Endothelial cell of umbilical vein (primary cell): ENCODE measurements at regions of chr11 and their contacts with region 1.

Region 1: GRCh38 chr11:133927690-133928627 is 28.8 kb downstream of the IGSF9B start:
- DNase-seq: peak; percentile 45
- H3K4me3 ChIP-seq: no peak overlapping the region
- H3K27ac ChIP-seq: no peak overlapping the region
- H3K4me1 ChIP-seq: no peaks in the 10 kb centered on the region
- H3K27me3 ChIP-seq: no peaks in the 10 kb centered on the region
- CTCF ChIP-seq: peak; percentile 70 to 89
- POLR2A ChIP-seq: no peak

Region 2: GRCh38 chr11:133947321-133947756 is 19.4 kb after region 1 on chr11:
- CTCF ChIA-PET with region 1: interaction called, 10 read pairs
- POLR2A ChIA-PET with region 1: no interaction called
- dilution Hi-C with region 1: no loop called
- intact Hi-C with region 1: no loop called
- DNase-seq: peak; percentile 20
- H3K4me3 ChIP-seq: no peak overlapping the region
- H3K27ac ChIP-seq: no peak overlapping the region
- H3K4me1 ChIP-seq: no peaks in the 10 kb centered on the region
- H3K27me3 ChIP-seq: peaks cover 17 to 19% of the 10 kb centered on the region in 2 experiments
- CTCF ChIP-seq: peak in 1 of 2 donors; percentile 39
- POLR2A ChIP-seq: no peak

Region 3: DNA sequence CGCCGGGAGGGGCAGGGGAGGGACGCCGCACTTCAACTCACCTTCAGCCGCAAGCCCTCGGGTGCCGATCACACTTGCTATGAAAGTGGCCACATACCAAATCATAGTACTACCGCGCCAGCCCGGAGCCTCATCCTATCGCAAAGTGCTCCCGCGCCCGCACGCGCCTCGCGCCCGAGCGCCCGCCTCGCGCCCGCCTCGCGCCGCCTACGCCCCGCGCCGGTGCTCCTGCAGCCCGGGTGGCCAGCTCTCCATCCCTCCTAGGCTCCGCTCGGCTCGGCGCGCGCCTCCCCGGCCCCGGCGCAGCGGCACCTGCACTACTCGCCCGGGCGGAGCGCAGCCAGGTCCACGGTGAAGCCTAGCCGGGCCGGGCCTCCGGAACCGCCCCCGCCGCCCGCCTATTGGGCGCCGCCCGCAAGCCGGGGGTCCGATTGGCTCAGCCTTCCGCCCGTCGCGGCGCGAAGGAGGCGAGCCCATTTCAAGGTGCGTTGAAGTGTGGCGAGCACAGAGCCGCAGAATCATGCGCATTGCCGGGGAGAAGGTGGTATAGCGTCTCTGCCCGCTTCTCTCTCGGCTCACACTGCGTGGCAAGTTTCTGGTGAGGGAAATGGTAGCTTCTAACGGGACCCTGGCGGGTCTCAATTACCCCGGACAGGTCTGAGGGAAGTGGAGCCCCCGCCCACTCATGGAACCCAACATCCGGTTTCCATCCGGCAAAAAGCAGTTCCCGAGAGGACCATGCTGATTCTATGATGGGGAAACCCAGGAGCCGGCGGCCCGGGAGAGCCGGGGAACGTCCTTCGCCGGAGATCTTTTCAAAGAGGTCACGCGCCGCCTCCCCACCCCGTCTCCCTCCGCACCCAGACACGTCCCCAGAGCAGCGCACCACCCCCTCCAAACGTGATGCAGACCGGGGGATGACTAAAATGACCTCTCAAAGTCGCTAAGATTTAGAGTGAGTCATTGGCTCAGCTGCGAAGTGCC is 29.0 kb after region 1 on chr11 and contains the start of gene IGSF9B:
- CTCF ChIA-PET with region 1: no interaction called
- POLR2A ChIA-PET with region 1: no interaction called
- dilution Hi-C with region 1: no loop called
- intact Hi-C with region 1: loop called (anchors 2 kb)
- DNase-seq: peak; percentile 73
- H3K4me3 ChIP-seq: peak within 1 kb of the TSS; percentile 13 to 39 (median 29)
- H3K27ac ChIP-seq: no peak within 1 kb of the TSS
- H3K4me1 ChIP-seq: no peaks in the 10 kb centered on the region
- H3K27me3 ChIP-seq: peaks cover 34 to 40% of the 10 kb centered on the region in 2 experiments
- CTCF ChIP-seq: no peak
- POLR2A ChIP-seq: no peak
- total RNA-seq, gene IGSF9B: 0.15 and 0.69 TPM in 2 replicates

Region 4: GRCh38 chr11:134033696-134034491 is 105.9 kb after region 1 on chr11:
- CTCF ChIA-PET with region 1: interaction called, 9 read pairs
- POLR2A ChIA-PET with region 1: no interaction called
- dilution Hi-C with region 1: no loop called
- intact Hi-C with region 1: loop called (anchors 2 kb)
- DNase-seq: peak; percentile 75
- H3K4me3 ChIP-seq: no peak overlapping the region
- H3K27ac ChIP-seq: no peak overlapping the region
- H3K4me1 ChIP-seq: peaks cover 11% of the 10 kb centered on the region
- H3K27me3 ChIP-seq: peaks cover 0 to 3% of the 10 kb centered on the region in 2 experiments
- CTCF ChIP-seq: no peak
- POLR2A ChIP-seq: no peak

Region 5: GRCh38 chr11:134119094-134119493 is 191.1 kb after region 1 on chr11:
- CTCF ChIA-PET with region 1: no interaction called
- POLR2A ChIA-PET with region 1: no interaction called
- dilution Hi-C with region 1: no loop called
- intact Hi-C with region 1: no loop called
- DNase-seq: peak; percentile 34
- H3K4me3 ChIP-seq: no peak overlapping the region
- H3K27ac ChIP-seq: peak overlapping the region; percentile 97
- H3K4me1 ChIP-seq: peaks cover 54% of the 10 kb centered on the region
- H3K27me3 ChIP-seq: no peaks in the 10 kb centered on the region
- CTCF ChIP-seq: no peak
- POLR2A ChIP-seq: no peak

Region 6: GRCh38 chr11:134139873-134140331 is 211.9 kb after region 1 on chr11:
- CTCF ChIA-PET with region 1: interaction called, 4 read pairs
- POLR2A ChIA-PET with region 1: no interaction called
- dilution Hi-C with region 1: no loop called
- intact Hi-C with region 1: loop called (anchors 1 kb)
- DNase-seq: peak; percentile 87
- H3K4me3 ChIP-seq: no peak overlapping the region
- H3K27ac ChIP-seq: no peak overlapping the region
- H3K4me1 ChIP-seq: no peaks in the 10 kb centered on the region
- H3K27me3 ChIP-seq: no peaks in the 10 kb centered on the region
- CTCF ChIP-seq: peak; percentile 81 to 84
- POLR2A ChIP-seq: no peak

Region 7: DNA sequence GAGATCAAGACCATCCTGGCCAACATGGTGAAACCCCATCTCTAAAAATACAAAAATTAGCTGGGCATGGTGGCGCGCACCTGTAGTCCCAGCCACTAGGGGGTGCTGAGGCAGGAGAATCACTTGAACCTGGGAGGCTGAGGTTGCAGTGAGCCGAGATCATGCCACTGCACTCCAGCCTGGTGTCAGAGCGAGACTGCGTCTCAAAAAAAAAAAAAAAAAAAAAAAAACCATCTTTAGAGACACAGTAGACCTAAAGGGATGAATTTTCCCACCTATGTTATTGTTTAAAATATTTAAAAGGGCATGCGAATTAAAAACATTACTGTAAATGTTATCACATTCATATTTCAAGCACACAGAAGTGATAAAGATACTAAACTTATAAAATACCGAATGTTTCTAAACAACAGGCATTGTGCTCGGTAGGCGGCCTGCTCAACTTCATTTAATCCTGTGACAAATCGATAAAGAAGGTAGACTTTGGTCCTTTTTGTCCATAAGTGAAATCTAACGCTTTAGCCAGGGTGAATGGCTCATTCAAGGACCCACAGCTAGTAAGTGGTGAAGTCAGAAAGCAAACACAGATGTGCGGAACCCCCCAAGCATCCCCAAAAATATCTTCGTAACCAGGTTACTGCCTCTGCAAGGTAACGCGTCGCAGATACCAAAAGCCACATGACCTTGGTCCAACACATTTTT is 279.7 kb after region 1 on chr11:
- CTCF ChIA-PET with region 1: interaction called, 3 read pairs
- POLR2A ChIA-PET with region 1: no interaction called
- dilution Hi-C with region 1: no loop called
- intact Hi-C with region 1: loop called (anchors 5 kb)
- DNase-seq: peak; percentile 10
- H3K4me3 ChIP-seq: no peak overlapping the region
- H3K27ac ChIP-seq: no peak overlapping the region
- H3K4me1 ChIP-seq: no peaks in the 10 kb centered on the region
- H3K27me3 ChIP-seq: no peaks in the 10 kb centered on the region
- CTCF ChIP-seq: peak; percentile 39 to 54
- POLR2A ChIP-seq: no peak